Activated CD4-positive, alpha-beta memory T cell treated with anti-CD3 and anti-CD28 coated beads, Interleukin-2, amount 10 ng/mL, durations not matched to agents 7 days and 5 days (primary cell): ENCODE measurements at regions of chr19 and their contacts with region 1.

Region 1: GRCh38 chr19:7535035-7535992 is at the start of gene PNPLA6:
- DNase-seq: peak; percentile 93
- H3K4me3 Mint-ChIP-seq: peak within 1 kb of the TSS; percentile 93
- H3K27ac Mint-ChIP-seq: peak within 1 kb of the TSS; percentile 81
- H3K4me1 Mint-ChIP-seq: peaks cover 23% of the 10 kb centered on the region
- H3K27me3 Mint-ChIP-seq: no peaks in the 10 kb centered on the region
- total RNA-seq, gene PNPLA6: 130 to 152 TPM

Region 2: GRCh38 chr19:7488736-7489353 is 46.5 kb before region 1 on chr19 and contains the start of gene PEX11G:
- CTCF ChIA-PET with region 1: no interaction called
- POLR2A ChIA-PET with region 1: no interaction called
- DNase-seq: peak; percentile 93
- H3K4me3 Mint-ChIP-seq: peak within 1 kb of the TSS; percentile 72
- H3K27ac Mint-ChIP-seq: peak within 1 kb of the TSS; percentile 71
- H3K4me1 Mint-ChIP-seq: peaks cover 33% of the 10 kb centered on the region
- H3K27me3 Mint-ChIP-seq: no peaks in the 10 kb centered on the region
- total RNA-seq, gene PEX11G: 0.68 to 1.7 TPM

Region 3: GRCh38 chr19:7500811-7501450 is 34.4 kb before region 1 on chr19:
- CTCF ChIA-PET with region 1: no interaction called
- POLR2A ChIA-PET with region 1: no interaction called
- DNase-seq: peak; percentile 57
- H3K4me3 Mint-ChIP-seq: no peak overlapping the region
- H3K27ac Mint-ChIP-seq: no peak overlapping the region
- H3K4me1 Mint-ChIP-seq: peaks cover 4% of the 10 kb centered on the region
- H3K27me3 Mint-ChIP-seq: peaks cover 41% of the 10 kb centered on the region

Region 4: GRCh38 chr19:7522072-7522922 is 13.0 kb before region 1 on chr19 and contains the start of gene MCOLN1:
- CTCF ChIA-PET with region 1: interaction called, 7 read pairs
- POLR2A ChIA-PET with region 1: interaction called, 60 read pairs
- DNase-seq: peak; percentile 100
- H3K4me3 Mint-ChIP-seq: peak within 1 kb of the TSS; percentile 83
- H3K27ac Mint-ChIP-seq: peak within 1 kb of the TSS; percentile 33
- H3K4me1 Mint-ChIP-seq: peaks cover 15% of the 10 kb centered on the region
- H3K27me3 Mint-ChIP-seq: peaks cover 3% of the 10 kb centered on the region
- total RNA-seq, gene MCOLN1: 15.2 to 15.3 TPM

Region 5: DNA sequence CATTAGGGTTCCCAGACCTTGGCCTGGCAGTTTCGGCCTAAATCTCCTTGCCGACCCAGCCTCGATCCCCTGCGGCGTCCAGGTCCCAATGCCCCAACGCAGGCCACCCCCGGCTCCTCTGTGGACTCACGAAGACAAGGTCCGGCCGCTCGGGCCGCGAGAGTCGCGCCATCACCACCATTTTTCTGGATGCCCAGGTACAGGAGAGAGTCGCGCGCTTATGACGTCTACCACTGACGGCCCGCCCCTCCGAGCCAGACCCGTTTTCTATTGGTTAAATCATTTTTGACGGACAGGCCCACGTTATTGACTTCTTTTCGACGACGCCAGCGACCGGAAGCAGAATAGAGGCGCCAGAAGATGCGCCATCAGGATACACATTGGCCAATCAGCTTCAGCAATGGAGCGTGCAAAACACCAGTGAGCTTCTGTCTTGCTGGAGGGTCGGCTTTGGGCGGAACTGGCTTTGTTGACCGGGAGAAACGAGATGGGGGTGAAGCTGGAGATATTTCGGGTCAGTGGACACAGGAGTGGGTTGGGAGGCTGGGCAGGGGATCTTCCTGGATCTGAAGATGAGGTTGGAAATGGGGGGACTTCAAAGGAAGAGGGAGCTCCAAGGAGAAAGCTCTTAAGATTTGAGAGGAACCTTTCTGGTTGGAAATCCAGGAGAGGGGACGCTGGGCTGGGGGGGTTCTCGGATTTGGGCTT is 94.2 kb after region 1 on chr19 and contains the starts of genes PET100 and XAB2:
- CTCF ChIA-PET with region 1: interaction called, 3 read pairs
- POLR2A ChIA-PET with region 1: interaction called, 12 read pairs
- DNase-seq: peak; percentile 96
- H3K4me3 Mint-ChIP-seq: peak within 1 kb of the TSS; percentile 99
- H3K27ac Mint-ChIP-seq: peak within 1 kb of the TSS; percentile 99
- H3K4me1 Mint-ChIP-seq: peaks cover 37% of the 10 kb centered on the region
- H3K27me3 Mint-ChIP-seq: no peaks in the 10 kb centered on the region
- total RNA-seq, gene PET100: 123 to 136 TPM
- total RNA-seq, gene XAB2: 48.5 TPM